Dorsolateral prefrontal cortex (tissue), 120 donors: ENCODE measurements at regions of chr6 and their contacts with region 1.

Region 1: GRCh38 chr6:41936073-41936837 is 5.4 kb downstream of the CCND3 start:
- DNase-seq: peak; percentile 57 to 85 (median 81)
- H3K4me3 ChIP-seq: peak overlapping the region in 10 of 59 donors; percentile 2 to 34 (median 16)
- H3K27ac ChIP-seq: peak overlapping the region in 50 of 59 donors; percentile 3 to 92 (median 63)
- H3K27me3 ChIP-seq: no peaks in the 10 kb centered on the region
- CTCF ChIP-seq: peak; percentile 55 to 89 (median 80)

Region 2: DNA sequence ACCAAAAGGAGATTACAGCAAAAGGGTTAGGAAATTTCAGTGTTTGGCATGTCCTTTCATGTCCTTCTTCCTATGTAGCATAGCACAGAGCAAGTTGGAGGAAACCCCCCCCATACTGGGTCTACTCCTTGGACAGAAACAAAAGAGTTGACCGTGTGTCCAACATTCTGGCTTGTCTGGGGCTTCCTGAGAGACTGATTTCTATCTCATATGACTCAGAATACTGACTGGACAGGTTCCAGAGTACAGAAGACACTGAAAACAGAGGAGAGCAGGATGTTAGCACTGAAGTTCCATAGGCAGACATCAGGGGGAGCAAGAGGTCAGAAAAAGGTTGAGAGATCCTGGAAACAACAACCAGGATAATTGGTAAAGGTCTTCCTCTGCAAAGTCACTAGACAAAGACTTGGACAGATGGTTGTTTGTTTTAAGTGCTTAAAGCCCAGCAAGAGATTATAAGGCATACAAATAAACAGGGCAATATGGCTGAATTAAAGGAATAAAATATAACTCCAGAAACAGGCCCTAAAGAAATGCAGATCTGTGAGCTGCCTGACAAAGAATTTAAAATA is 89.5 kb before region 1 on chr6:
- intact Hi-C with region 1: loop called in 1 of 2 experiments (anchors 5 kb)
- DNase-seq: peak in 1 of 10 donors; percentile 24
- H3K4me3 ChIP-seq: no peak overlapping the region
- H3K27ac ChIP-seq: peak overlapping the region in 7 of 59 donors; percentile 26 to 59 (median 39)
- H3K27me3 ChIP-seq: no peaks in the 10 kb centered on the region
- CTCF ChIP-seq: peak in 55 of 56 donors; percentile 23 to 82 (median 68)

Region 3: GRCh38 chr6:42118162-42119001 is 182.1 kb after region 1 on chr6:
- intact Hi-C with region 1: no loop called
- DNase-seq: peak in 2 of 10 donors; percentile 37 to 72
- H3K4me3 ChIP-seq: no peak overlapping the region
- H3K27ac ChIP-seq: no peak overlapping the region
- H3K27me3 ChIP-seq: peaks cover 0 to 7% (median 0%) of the 10 kb centered on the region in 45 donors
- CTCF ChIP-seq: no peak